PC-3 (cell line): ENCODE measurements at regions of chr4 and their contacts with region 1.

Region 1: DNA sequence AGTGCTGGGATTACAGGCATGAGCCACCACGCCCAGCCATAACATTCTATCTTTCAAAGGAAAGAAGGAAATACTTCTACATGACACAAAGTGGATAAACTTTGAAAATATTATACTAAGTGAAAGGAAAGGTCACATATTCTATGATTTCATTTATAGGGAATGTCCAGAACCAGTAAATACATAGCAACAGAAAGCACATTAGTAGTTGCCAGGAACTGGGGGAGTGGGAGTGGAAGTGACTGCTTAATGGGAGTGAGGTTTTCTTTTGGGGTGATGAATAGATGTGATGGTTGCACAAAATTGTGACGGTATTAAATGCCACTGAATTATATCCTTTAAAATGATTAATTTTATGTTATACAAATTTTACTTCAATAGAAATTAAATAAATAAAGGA is 95.7 kb upstream of the IL15 start:
- DNase-seq: peak; percentile 85
- ATAC-seq: peak; percentile 70
- H3K4me3 ChIP-seq: no peak overlapping the region
- H3K27ac ChIP-seq: peak overlapping the region; percentile 84
- H3K4me1 ChIP-seq: peaks cover 42% of the 10 kb centered on the region
- H3K27me3 ChIP-seq: no peaks in the 10 kb centered on the region
- CTCF ChIP-seq: no peak

Region 2: DNA sequence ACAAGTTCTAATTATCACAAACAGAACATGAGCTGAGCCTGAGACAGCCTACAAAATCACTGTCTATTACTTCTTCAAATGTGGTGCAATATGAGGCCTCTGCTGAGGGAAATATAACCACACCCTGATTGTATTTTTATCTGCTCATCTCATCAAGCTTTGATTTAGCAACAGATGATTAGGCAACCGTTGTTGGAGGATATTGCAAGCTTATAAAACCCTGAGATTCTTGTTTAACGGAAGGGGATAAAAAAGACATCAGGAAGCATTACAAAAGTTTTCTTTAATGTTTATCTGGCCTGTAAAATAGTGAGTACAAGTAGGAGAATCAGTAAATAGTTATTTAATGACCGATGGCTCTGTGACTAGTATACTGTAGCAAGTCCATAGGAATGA is 211.5 kb before region 1 on chr4:
- CTCF ChIA-PET with region 1: no interaction called
- POLR2A ChIA-PET with region 1: no interaction called
- intact Hi-C with region 1: loop called (anchors 1 kb)
- DNase-seq: peak; percentile 95
- ATAC-seq: peak; percentile 94
- H3K4me3 ChIP-seq: peak overlapping the region; percentile 36; the same call in 1 of the 2 replicates
- H3K27ac ChIP-seq: peak overlapping the region; percentile 89
- H3K4me1 ChIP-seq: peaks cover 38% of the 10 kb centered on the region
- H3K27me3 ChIP-seq: no peaks in the 10 kb centered on the region
- CTCF ChIP-seq: no peak

Region 3: DNA sequence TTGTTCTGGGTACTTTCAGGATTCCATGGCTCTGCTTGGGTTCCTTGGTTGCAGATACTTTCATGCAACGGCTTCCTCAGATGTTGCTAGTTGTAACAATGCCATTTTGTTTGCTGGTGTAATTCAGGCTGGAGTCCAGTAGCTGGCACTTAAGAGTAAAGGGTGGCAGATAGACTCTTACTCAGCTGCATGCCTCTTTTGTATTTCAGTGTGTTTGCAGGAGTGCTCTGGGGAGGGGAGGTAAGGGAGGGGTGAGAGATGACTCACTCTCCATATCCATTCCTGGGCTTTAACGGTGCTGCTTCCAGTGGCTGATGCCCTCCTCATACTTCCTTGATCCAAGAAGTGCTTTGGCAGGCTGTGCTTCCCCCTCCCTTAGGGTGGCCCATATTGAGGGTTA is 164.8 kb before region 1 on chr4:
- CTCF ChIA-PET with region 1: no interaction called
- POLR2A ChIA-PET with region 1: no interaction called
- intact Hi-C with region 1: loop called (anchors 10 kb)
- DNase-seq: peak; percentile 95
- ATAC-seq: peak; percentile 100
- H3K4me3 ChIP-seq: no peak overlapping the region
- H3K27ac ChIP-seq: no peak overlapping the region
- H3K4me1 ChIP-seq: peaks cover 6% of the 10 kb centered on the region
- H3K27me3 ChIP-seq: no peaks in the 10 kb centered on the region
- CTCF ChIP-seq: peak; percentile 93

Region 4: DNA sequence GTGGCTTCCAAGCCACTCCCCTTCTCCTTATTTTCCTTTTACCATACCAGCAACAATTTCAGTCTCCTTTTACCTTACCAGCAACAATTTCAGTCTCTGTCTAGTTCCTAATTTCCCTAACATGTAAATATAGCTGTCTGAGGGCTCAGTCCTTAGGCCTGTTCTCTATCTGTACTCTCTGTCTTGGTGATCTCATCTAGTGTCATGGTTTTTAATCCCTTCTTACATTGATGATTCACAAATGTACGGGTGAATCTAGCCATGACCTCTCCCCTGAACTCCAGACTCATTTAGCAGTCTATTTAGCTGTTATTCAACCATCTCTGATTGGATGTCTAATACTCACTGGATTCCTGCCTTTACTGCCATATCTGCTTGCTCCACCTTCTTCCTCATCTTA is 102.9 kb after region 1 on chr4:
- CTCF ChIA-PET with region 1: no interaction called
- POLR2A ChIA-PET with region 1: no interaction called
- intact Hi-C with region 1: loop called (anchors 2 kb)
- DNase-seq: peak; percentile 92
- ATAC-seq: peak; percentile 78
- H3K4me3 ChIP-seq: peak overlapping the region; percentile 48
- H3K27ac ChIP-seq: peak overlapping the region; percentile 92
- H3K4me1 ChIP-seq: peaks cover 40% of the 10 kb centered on the region
- H3K27me3 ChIP-seq: no peaks in the 10 kb centered on the region
- CTCF ChIP-seq: no peak

Region 5: DNA sequence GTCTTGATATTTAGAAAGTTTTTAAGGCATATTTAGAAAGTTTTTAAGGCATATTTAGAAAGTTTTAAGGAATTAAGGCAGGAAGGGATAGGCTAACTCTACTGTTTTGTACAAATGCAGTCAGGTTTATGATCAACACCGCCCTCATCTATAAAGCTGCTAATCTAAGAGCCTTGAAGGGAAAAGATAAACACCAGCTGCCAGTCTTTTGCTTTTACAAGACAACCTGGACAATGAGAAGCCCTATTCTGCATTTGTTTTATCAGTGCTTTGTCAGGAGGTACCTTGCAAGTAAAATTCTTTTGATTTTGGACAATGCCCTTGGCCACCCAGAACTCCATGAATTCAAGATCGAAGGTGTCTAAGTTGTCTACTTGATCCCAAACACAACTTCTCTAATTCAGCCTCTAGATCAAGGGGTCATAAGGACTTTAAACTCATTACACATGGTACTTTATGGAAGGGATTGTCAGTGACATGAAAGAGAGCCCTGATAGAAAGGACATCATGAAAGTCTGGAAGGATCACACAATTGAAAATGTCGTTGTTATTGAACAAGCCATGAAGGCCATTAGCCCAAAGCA is 135.5 kb after region 1 on chr4:
- CTCF ChIA-PET with region 1: no interaction called
- POLR2A ChIA-PET with region 1: no interaction called
- intact Hi-C with region 1: loop called (anchors 5 kb)
- DNase-seq: no peak
- ATAC-seq: no peak
- H3K4me3 ChIP-seq: no peak overlapping the region
- H3K27ac ChIP-seq: no peak overlapping the region
- H3K4me1 ChIP-seq: peaks cover 21% of the 10 kb centered on the region
- H3K27me3 ChIP-seq: no peaks in the 10 kb centered on the region
- CTCF ChIP-seq: no peak

Region 6: DNA sequence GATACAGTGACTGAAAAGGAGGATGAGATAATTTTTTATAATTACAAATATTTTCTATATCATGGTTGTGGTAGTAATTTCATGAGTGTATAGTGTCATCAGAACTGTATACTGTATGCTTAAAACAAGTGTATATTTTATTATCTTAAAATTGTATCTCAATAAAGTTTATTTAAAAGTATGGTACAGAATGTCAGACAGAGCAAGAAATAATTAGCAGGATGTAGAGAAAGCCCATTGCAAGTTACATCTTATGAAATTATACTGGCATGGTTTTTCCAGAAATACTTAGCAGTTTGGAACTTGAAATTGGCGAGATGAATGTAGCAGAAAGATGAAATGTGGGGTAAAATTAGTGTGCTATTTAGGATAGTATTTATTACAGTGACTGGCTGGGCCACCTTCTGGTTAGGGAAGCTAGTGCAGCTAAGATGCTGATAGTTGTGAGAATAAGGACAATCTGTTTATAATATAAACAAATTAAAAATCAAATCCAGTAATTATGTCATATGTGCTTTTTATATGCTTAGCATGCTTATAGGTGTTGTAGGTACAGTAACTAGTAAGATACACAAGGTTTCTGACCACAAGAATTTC is 170.5 kb after region 1 on chr4:
- CTCF ChIA-PET with region 1: no interaction called
- POLR2A ChIA-PET with region 1: no interaction called
- intact Hi-C with region 1: loop called (anchors 10 kb)
- DNase-seq: peak; percentile 61
- ATAC-seq: peak; percentile 50
- H3K4me3 ChIP-seq: no peak overlapping the region
- H3K27ac ChIP-seq: no peak overlapping the region
- H3K4me1 ChIP-seq: peaks cover 24% of the 10 kb centered on the region
- H3K27me3 ChIP-seq: no peaks in the 10 kb centered on the region
- CTCF ChIP-seq: peak; percentile 76